Activated CD4-positive, alpha-beta T cell treated with anti-CD3 and anti-CD28 coated beads for 36 hours (primary cell): ENCODE measurements at regions of chr11 and their contacts with region 1.

Region 1: DNA sequence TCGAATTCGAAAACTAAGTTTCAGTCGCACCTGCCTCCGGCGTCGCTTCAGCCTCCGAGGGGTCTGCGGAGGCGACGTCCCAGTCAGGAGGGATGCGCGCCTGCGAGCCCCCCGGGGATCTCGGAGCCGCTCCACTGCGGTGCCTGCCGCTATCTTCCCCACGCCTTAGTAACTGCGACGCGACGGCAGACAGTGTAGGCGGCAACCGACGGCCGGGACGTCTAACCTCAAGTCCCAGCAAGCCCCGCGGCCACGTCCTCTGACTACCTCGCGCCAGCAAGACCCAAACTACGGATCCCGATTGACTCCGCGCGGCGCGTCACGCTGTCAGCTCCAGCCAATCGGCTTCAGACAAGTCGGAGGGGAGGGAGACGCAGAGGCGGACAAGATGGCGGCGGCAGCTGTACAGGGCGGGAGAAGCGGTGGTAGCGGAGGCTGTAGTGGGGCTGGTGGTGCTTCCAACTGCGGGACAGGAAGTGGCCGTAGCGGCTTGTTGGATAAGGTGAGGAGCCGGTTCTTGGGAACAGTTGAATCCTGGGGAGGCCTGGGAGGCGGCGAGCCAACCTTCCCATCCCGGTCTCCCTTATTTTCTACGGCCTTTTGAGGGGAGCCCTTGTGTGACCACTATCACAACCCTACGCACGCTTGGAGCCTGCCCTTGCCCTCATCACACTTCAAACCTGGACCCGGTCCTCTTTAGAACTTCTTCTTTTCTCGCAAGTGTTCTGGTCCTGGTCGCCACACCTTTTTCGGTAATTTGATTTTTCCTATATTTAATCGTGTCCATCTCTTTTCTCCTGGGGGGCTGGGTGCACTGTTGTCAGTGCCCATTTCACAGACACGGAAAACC is at the starts of genes SPCS2 and XRRA1:
- DNase-seq: peak; percentile 100
- ATAC-seq: peak; percentile 99
- H3K4me3 Mint-ChIP-seq: peak within 1 kb of the TSS; percentile 96
- H3K27ac Mint-ChIP-seq: peak within 1 kb of the TSS; percentile 97
- H3K4me1 Mint-ChIP-seq: peaks cover 42% of the 10 kb centered on the region
- H3K27me3 Mint-ChIP-seq: no peaks in the 10 kb centered on the region
- total RNA-seq, gene SPCS2: 124 to 131 TPM
- total RNA-seq, gene XRRA1: 7.8 to 11.9 TPM

Region 2: GRCh38 chr11:74170694-74171629 is 778.2 kb before region 1 on chr11 and contains the starts of genes C2CD3 and PPME1:
- CTCF ChIA-PET with region 1: no interaction called
- POLR2A ChIA-PET with region 1: no interaction called
- intact Hi-C with region 1: loop called in 1 of 2 experiments (anchors 2 kb)
- DNase-seq: peak; percentile 98
- ATAC-seq: peak; percentile 96
- H3K4me3 Mint-ChIP-seq: no peak within 1 kb of the TSS
- H3K27ac Mint-ChIP-seq: no peak within 1 kb of the TSS
- H3K4me1 Mint-ChIP-seq: peaks cover 16% of the 10 kb centered on the region
- H3K27me3 Mint-ChIP-seq: no peaks in the 10 kb centered on the region
- total RNA-seq, gene C2CD3: 23.9 to 28.0 TPM
- total RNA-seq, gene PPME1: 54.2 to 61.5 TPM

Region 3: GRCh38 chr11:74731301-74732094 is 217.6 kb before region 1 on chr11 and contains the start of gene CHRDL2:
- CTCF ChIA-PET with region 1: no interaction called
- POLR2A ChIA-PET with region 1: no interaction called
- intact Hi-C with region 1: no loop called
- DNase-seq: no peak
- ATAC-seq: no peak
- H3K4me3 Mint-ChIP-seq: no peak within 1 kb of the TSS
- H3K27ac Mint-ChIP-seq: no peak within 1 kb of the TSS
- H3K4me1 Mint-ChIP-seq: peaks cover 9% of the 10 kb centered on the region
- H3K27me3 Mint-ChIP-seq: peaks cover 54% of the 10 kb centered on the region
- total RNA-seq, gene CHRDL2: not detected

Region 4: GRCh38 chr11:74748211-74749127 is 200.7 kb before region 1 on chr11 and contains the start of gene RNF169:
- CTCF ChIA-PET with region 1: no interaction called
- POLR2A ChIA-PET with region 1: no interaction called
- intact Hi-C with region 1: loop called in 1 of 2 experiments (anchors 1 kb)
- DNase-seq: peak; percentile 93
- ATAC-seq: peak; percentile 97
- H3K4me3 Mint-ChIP-seq: peak within 1 kb of the TSS; percentile 80
- H3K27ac Mint-ChIP-seq: peak within 1 kb of the TSS; percentile 73
- H3K4me1 Mint-ChIP-seq: peaks cover 29% of the 10 kb centered on the region
- H3K27me3 Mint-ChIP-seq: no peaks in the 10 kb centered on the region
- total RNA-seq, gene RNF169: 15.3 to 16.0 TPM

Region 5: DNA sequence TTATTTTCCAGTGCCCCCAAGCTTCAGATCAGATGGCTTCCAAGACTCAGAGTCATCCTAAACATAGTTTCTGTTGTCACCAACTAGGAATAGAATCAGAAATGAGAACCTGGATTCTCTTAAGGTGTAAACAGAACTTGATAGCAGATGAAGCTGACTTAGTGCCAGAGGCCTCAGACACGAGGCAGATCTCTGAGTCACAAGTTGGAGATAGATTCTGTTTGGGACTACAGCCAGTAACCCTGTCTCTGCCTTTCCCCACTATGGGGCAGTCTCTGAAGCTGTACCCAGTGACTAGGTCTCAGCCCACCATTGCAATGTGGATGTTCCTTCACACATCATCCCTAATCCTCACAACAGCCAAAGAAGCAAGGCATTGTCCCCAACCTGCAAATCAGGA is 65.0 kb after region 1 on chr11:
- CTCF ChIA-PET with region 1: no interaction called
- POLR2A ChIA-PET with region 1: no interaction called
- intact Hi-C with region 1: no loop called
- DNase-seq: no peak
- ATAC-seq: no peak
- H3K4me3 Mint-ChIP-seq: no peak overlapping the region
- H3K27ac Mint-ChIP-seq: no peak overlapping the region
- H3K4me1 Mint-ChIP-seq: no peaks in the 10 kb centered on the region
- H3K27me3 Mint-ChIP-seq: no peaks in the 10 kb centered on the region

Region 6: GRCh38 chr11:75241036-75241905 is 292.1 kb after region 1 on chr11:
- CTCF ChIA-PET with region 1: interaction called, 4 read pairs
- POLR2A ChIA-PET with region 1: interaction called, 3 read pairs
- intact Hi-C with region 1: loop called in 1 of 2 experiments (anchors 1 kb)
- DNase-seq: peak; percentile 92
- ATAC-seq: peak; percentile 88
- H3K4me3 Mint-ChIP-seq: peak overlapping the region; percentile 59
- H3K27ac Mint-ChIP-seq: no peak overlapping the region
- H3K4me1 Mint-ChIP-seq: peaks cover 8% of the 10 kb centered on the region
- H3K27me3 Mint-ChIP-seq: peaks cover 23% of the 10 kb centered on the region